Gastrocnemius medialis (tissue), 4 donors: ENCODE measurements at regions of chr17 and their contacts with region 1.

Region 1: DNA sequence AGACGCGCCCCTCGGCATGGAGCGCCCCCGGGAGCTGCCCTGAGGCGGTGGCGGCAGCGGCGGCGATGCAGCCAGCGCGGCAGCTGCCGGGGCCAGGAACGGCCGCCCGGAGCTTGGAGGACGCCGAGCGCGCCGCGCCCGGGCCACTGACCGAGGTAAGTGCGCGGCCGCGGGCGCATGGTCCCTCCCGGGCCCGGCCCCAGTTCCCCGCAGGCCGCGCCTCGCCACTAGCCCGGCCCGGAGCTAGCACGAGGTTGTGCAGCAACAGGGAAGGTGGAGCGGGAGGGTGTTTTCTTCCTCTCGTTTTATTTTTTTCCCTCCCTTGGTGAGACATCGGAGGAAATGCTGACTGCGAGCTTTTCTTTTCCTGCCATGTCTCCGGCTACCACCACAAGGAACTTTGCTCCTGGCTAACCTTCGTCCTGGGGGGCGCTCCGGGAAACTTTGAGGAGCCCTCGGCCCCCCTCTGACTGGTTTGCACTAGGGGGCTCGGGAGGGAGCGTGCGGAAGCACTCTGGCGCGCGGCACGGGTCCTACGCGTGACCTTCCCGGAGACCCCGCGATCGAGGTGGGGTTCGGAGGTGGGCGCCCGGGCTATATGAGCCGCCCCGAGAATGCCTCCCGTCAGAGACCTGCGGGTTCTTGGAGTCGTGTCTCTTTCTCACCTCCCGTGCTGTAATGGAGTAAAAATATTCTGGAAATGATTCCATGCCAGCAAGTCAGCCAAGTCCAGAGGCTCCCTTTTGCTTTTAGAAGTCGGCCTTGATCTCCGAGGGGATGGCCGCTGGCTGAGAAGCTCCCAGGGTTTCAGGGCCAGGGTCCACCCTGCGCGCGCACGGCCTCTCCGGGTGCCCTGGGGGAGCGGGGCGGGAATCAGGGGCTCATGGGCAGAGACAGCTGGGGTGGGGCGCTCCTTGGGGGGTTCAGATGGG is 868 bp downstream of the KCNJ12 start:
- DNase-seq: peak in 1 of 2 donors; percentile 36
- ATAC-seq: peak; percentile 44 to 45
- H3K4me3 ChIP-seq: peak overlapping the region; percentile 59 to 68 (median 62)
- H3K27ac ChIP-seq: peak overlapping the region; percentile 88 to 93 (median 89)
- H3K4me1 ChIP-seq: peaks cover 28 to 44% of the 10 kb centered on the region in 2 donors
- H3K27me3 ChIP-seq: no peaks in the 10 kb centered on the region
- CTCF ChIP-seq: no peak
- POLR2A ChIP-seq: no peak

Region 2: DNA sequence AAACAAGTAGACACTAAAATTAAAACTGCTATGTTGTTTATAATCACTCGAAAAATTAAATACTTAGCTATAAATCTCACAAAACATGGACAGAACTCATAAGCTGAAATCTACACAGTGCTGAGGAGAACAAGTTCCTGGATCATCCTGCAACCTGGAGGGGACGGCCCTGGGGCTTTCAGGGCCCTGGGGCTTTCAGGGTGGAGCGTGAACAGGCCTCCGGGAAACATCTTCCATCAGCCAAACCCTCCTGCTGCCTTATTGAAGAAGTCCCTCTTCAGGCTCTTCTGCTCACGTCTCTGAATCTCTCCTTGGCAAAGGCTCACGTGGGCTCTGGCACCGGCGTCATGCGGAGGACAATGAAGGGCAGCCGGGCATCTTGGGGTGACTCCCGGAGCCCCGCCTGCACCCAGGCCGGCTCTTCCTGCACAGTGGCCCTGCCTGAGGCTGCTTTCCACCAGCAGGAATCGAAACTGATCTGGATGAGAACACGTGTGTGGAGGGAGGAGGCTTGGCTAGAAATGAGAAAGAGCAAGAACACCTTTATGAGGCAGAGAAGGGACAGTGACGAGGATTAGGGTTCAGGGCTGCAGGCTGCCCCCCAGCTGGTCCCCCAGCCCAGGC is 670.2 kb before region 1 on chr17:
- in situ Hi-C with region 1: no loop called
- intact Hi-C with region 1: no loop called
- DNase-seq: no peak
- ATAC-seq: no peak
- H3K4me3 ChIP-seq: no peak overlapping the region
- H3K27ac ChIP-seq: no peak overlapping the region
- H3K4me1 ChIP-seq: no peaks in the 10 kb centered on the region
- H3K27me3 ChIP-seq: no peaks in the 10 kb centered on the region
- CTCF ChIP-seq: no peak
- POLR2A ChIP-seq: no peak

Region 3: DNA sequence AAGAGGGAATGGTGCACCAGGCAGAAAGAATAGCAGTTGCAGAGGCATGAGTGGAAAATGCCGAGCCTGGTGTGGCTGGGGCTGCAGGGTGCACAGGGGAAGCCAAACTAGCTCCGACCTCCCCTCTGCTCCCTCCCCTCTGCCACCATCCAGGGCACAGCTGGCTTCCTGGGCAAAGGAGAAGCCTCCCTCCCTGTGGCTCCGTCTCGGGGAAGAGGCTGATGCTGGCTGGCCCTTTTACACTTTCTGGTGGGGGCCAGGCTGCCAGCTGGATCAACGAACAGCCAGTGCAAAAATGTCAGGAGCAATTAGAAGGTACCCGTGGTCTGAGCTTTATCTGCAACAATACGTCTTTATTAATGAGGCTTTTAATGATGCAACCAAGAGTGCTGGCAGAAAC is 38.0 kb before region 1 on chr17:
- in situ Hi-C with region 1: no loop called
- intact Hi-C with region 1: loop called (anchors 5 kb)
- DNase-seq: no peak
- ATAC-seq: no peak
- H3K4me3 ChIP-seq: no peak overlapping the region
- H3K27ac ChIP-seq: no peak overlapping the region
- H3K4me1 ChIP-seq: peaks cover 0 to 7% of the 10 kb centered on the region in 2 donors
- H3K27me3 ChIP-seq: no peaks in the 10 kb centered on the region
- CTCF ChIP-seq: no peak
- POLR2A ChIP-seq: no peak